Endothelial cell of umbilical vein (primary cell): ENCODE measurements at regions of chr6 and their contacts with region 1.

Region 1: DNA sequence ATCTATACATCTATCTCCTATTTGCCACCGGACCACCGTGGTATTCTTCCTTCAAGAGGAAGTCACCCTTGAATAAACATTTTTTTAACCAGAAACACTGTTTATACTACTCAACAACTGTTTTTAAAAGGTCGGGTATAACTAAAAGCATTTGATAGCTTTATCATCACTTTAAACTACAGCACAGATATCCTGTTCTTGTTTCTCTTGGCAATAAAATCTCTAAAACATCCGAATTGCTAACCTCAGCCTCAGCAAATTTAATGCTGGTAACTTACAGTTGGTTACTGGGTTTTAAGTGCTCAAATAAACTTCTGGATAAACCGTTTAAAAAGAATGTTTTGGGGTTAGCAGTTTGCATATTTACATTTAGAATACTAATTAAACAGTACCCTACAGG is 20.4 kb downstream of the ZUP1 start:
- DNase-seq: peak; percentile 93
- H3K4me3 ChIP-seq: peak overlapping the region in 1 of 3 experiments; percentile 42
- H3K27ac ChIP-seq: peak overlapping the region; percentile 36
- H3K4me1 ChIP-seq: peaks cover 24% of the 10 kb centered on the region
- H3K27me3 ChIP-seq: no peaks in the 10 kb centered on the region
- CTCF ChIP-seq: no peak
- POLR2A ChIP-seq: peak; percentile 66

Region 2: DNA sequence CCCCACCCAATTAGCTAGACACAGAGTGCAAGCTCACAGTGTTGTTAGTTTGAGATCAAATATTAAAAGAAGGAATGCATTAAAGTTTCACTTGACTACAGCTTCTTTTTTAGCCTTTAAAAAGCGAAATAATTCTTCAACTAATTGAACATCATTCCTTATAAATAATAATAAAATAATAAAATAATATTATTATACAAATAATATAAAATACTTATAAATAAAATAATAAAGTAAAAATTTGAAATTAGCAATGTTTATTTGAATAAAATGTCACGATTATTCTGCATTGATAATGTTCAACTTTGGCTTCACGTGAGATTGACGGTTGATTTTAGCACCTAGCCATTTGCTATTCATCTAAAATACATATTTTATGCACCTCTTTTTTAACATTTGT is 1406.8 kb before region 1 on chr6:
- CTCF ChIA-PET with region 1: no interaction called
- POLR2A ChIA-PET with region 1: no interaction called
- dilution Hi-C with region 1: no loop called
- intact Hi-C with region 1: no loop called
- DNase-seq: no peak
- H3K4me3 ChIP-seq: no peak overlapping the region
- H3K27ac ChIP-seq: no peak overlapping the region
- H3K4me1 ChIP-seq: no peaks in the 10 kb centered on the region
- H3K27me3 ChIP-seq: no peaks in the 10 kb centered on the region
- CTCF ChIP-seq: no peak
- POLR2A ChIP-seq: no peak

Region 3: GRCh38 chr6:116010790-116011401 is 637.3 kb before region 1 on chr6:
- CTCF ChIA-PET with region 1: no interaction called
- POLR2A ChIA-PET with region 1: no interaction called
- dilution Hi-C with region 1: no loop called
- intact Hi-C with region 1: no loop called
- DNase-seq: peak; percentile 73
- H3K4me3 ChIP-seq: no peak overlapping the region
- H3K27ac ChIP-seq: no peak overlapping the region
- H3K4me1 ChIP-seq: peaks cover 11% of the 10 kb centered on the region
- H3K27me3 ChIP-seq: no peaks in the 10 kb centered on the region
- CTCF ChIP-seq: peak; percentile 72 to 81
- POLR2A ChIP-seq: no peak

Region 4: GRCh38 chr6:116398316-116399010 is 249.7 kb before region 1 on chr6:
- CTCF ChIA-PET with region 1: no interaction called
- POLR2A ChIA-PET with region 1: no interaction called
- dilution Hi-C with region 1: no loop called
- intact Hi-C with region 1: no loop called
- DNase-seq: peak; percentile 50
- H3K4me3 ChIP-seq: no peak overlapping the region
- H3K27ac ChIP-seq: no peak overlapping the region
- H3K4me1 ChIP-seq: peaks cover 7% of the 10 kb centered on the region
- H3K27me3 ChIP-seq: no peaks in the 10 kb centered on the region
- CTCF ChIP-seq: no peak
- POLR2A ChIP-seq: no peak

Region 5: DNA sequence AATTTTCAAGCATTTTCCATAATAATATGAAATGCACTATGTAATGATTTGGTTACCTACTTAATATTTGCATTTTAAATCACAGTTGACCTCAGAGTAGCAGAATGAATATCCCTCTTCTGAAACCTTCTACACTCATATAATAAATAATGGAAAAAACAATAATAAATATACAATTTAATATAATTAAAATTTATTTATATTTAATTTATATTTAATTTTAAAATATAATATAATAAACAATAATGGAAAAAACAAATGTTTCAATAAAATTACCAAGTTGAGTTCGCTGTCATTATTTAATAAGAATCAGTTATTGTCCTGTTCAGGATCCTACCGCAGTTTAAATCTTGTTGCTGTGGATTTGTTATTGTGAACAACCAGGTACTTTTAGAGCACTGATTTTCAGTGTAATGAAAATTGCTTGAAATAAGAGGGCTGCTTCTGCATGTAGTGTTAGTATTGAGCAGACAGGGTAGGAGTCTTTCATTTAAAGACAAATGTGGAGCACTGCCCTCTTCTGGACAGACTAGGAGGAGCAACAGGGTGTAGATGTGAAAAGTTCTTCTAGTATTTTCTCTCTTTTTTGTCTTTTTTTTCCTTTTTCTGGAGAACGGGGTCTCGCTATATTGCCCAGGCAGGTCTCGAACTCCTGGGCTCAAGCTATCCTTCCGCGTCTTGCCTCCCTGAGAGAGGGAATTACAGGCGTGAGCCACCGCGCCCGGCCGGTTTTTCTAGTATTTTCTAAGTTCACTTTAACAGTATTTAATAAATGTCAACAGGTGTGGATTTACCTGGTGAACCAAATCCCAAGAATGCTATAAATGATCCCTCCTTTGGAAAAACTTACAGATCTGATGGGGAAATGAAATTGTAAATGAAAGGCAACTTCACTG is 116.2 kb before region 1 on chr6:
- CTCF ChIA-PET with region 1: interaction called, 21 read pairs
- POLR2A ChIA-PET with region 1: no interaction called
- dilution Hi-C with region 1: no loop called
- intact Hi-C with region 1: loop called (anchors 1 kb)
- DNase-seq: peak; percentile 86
- H3K4me3 ChIP-seq: no peak overlapping the region
- H3K27ac ChIP-seq: no peak overlapping the region
- H3K4me1 ChIP-seq: peaks cover 16% of the 10 kb centered on the region
- H3K27me3 ChIP-seq: peaks cover 0 to 2% of the 10 kb centered on the region in 2 experiments
- CTCF ChIP-seq: peak; percentile 59 to 74
- POLR2A ChIP-seq: no peak

Region 6: GRCh38 chr6:116570856-116571682 is 77.1 kb before region 1 on chr6 and contains the start of gene RWDD1:
- CTCF ChIA-PET with region 1: interaction called, 3 read pairs
- POLR2A ChIA-PET with region 1: no interaction called
- dilution Hi-C with region 1: no loop called
- intact Hi-C with region 1: loop called (anchors 2 kb)
- DNase-seq: peak; percentile 99
- H3K4me3 ChIP-seq: peak within 1 kb of the TSS; percentile 87 to 98 (median 98)
- H3K27ac ChIP-seq: peak within 1 kb of the TSS; percentile 84
- H3K4me1 ChIP-seq: peaks cover 33% of the 10 kb centered on the region
- H3K27me3 ChIP-seq: no peaks in the 10 kb centered on the region
- CTCF ChIP-seq: no peak
- POLR2A ChIP-seq: peak; percentile 89
- total RNA-seq, gene RWDD1: 37.9 and 44.2 TPM in 2 replicates

Region 7: DNA sequence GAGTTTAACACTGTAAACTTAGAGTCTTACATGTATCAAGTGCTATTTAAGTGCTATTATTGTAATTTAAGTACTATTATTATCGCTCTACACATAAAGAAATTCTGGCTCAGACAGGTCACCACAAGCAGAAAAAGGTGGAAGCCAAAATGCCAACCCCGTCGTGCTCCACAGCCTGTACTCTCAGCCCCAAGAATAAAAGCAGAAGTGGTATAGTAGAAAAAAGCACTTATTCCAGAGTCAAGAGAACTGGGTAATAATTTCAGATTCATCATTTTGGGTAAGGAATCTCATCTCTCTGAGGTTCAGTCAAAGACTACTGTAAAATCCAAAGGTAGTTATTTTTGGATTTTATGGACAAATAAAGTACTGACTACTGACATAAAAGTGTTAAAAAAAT is 19.5 kb after region 1 on chr6:
- CTCF ChIA-PET with region 1: interaction called, 18 read pairs
- POLR2A ChIA-PET with region 1: no interaction called
- dilution Hi-C with region 1: no loop called
- intact Hi-C with region 1: loop called (anchors 1 kb)
- DNase-seq: no peak
- H3K4me3 ChIP-seq: peak overlapping the region; percentile 56 to 92 (median 84)
- H3K27ac ChIP-seq: peak overlapping the region; percentile 64
- H3K4me1 ChIP-seq: peaks cover 17% of the 10 kb centered on the region
- H3K27me3 ChIP-seq: peaks cover 0 to 1% of the 10 kb centered on the region in 2 experiments
- CTCF ChIP-seq: no peak
- POLR2A ChIP-seq: no peak

Region 8: DNA sequence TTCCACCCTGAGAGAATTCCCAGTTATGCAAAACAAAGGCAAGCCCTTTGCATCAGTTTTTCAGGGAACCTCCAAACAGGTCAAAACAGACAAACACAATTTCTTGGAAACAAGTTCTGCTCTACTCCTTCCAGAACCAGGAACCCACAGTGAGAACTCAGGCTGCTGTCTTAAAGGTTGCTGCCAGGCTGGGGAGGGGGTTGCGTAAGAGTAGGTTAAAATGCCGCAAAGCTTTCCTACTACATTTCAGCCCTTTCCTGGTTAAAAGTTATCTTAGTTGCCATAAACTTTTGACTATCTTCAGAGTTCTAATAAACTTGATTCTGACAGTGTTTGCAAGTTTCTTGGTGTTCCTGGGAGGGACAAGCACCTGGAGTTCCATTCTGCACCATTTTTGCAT is 66.6 kb after region 1 on chr6:
- CTCF ChIA-PET with region 1: no interaction called
- POLR2A ChIA-PET with region 1: no interaction called
- dilution Hi-C with region 1: no loop called
- intact Hi-C with region 1: no loop called
- DNase-seq: no peak
- H3K4me3 ChIP-seq: no peak overlapping the region
- H3K27ac ChIP-seq: no peak overlapping the region
- H3K4me1 ChIP-seq: no peaks in the 10 kb centered on the region
- H3K27me3 ChIP-seq: no peaks in the 10 kb centered on the region
- CTCF ChIP-seq: no peak
- POLR2A ChIP-seq: no peak

Region 9: GRCh38 chr6:116741571-116741970 is 93.4 kb after region 1 on chr6:
- CTCF ChIA-PET with region 1: no interaction called
- POLR2A ChIA-PET with region 1: no interaction called
- dilution Hi-C with region 1: no loop called
- intact Hi-C with region 1: loop called (anchors 2 kb)
- DNase-seq: peak; percentile 73
- H3K4me3 ChIP-seq: no peak overlapping the region
- H3K27ac ChIP-seq: peak overlapping the region; percentile 61
- H3K4me1 ChIP-seq: peaks cover 11% of the 10 kb centered on the region
- H3K27me3 ChIP-seq: no peaks in the 10 kb centered on the region
- CTCF ChIP-seq: no peak
- POLR2A ChIP-seq: no peak